Ovary (tissue), 10 donors: ENCODE measurements at regions of chr14 and their contacts with region 1.

Region 1: GRCh38 chr14:66495218-66496098 is 9.3 kb downstream of the CCDC196 start:
- DNase-seq: peak in 3 of 5 donors; percentile 11 to 50 (median 31)
- H3K4me3 ChIP-seq: no peak overlapping the region
- H3K27ac ChIP-seq: no peak overlapping the region
- H3K4me1 ChIP-seq: no peaks in the 10 kb centered on the region
- H3K27me3 ChIP-seq: no peaks in the 10 kb centered on the region
- CTCF ChIP-seq: peak; percentile 48 to 59 (median 56)
- EP300 ChIP-seq: no peak
- POLR2A ChIP-seq: no peak

Region 2: GRCh38 chr14:66315548-66315947 is 179.9 kb before region 1 on chr14:
- intact Hi-C with region 1: no loop called
- DNase-seq: no peak
- H3K4me3 ChIP-seq: no peak overlapping the region
- H3K27ac ChIP-seq: no peak overlapping the region
- H3K4me1 ChIP-seq: no peaks in the 10 kb centered on the region
- H3K27me3 ChIP-seq: no peaks in the 10 kb centered on the region
- CTCF ChIP-seq: no peak
- EP300 ChIP-seq: no peak
- POLR2A ChIP-seq: no peak

Region 3: DNA sequence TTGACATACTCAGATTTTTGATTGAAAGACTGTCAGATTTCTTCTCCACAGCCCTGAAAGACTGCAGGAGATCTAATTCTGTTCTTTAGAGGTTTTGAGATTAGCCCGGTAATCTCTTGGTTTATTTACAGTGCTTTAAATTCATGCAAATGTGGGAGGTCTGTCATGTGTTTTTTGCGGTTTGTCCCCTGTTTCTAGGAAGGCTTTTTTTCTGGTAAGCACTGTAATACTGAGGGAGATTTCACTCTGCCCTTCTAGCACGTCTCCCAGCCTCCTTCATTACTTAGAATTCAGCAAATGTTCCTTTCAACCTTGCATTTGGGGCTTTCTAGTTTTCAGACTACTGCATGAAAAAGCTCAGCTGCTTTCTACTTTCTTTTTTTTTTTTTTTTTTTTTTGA is 43.6 kb after region 1 on chr14:
- intact Hi-C with region 1: no loop called
- DNase-seq: no peak
- H3K4me3 ChIP-seq: no peak overlapping the region
- H3K27ac ChIP-seq: no peak overlapping the region
- H3K4me1 ChIP-seq: no peaks in the 10 kb centered on the region
- H3K27me3 ChIP-seq: no peaks in the 10 kb centered on the region
- CTCF ChIP-seq: no peak
- EP300 ChIP-seq: no peak
- POLR2A ChIP-seq: no peak

Region 4: DNA sequence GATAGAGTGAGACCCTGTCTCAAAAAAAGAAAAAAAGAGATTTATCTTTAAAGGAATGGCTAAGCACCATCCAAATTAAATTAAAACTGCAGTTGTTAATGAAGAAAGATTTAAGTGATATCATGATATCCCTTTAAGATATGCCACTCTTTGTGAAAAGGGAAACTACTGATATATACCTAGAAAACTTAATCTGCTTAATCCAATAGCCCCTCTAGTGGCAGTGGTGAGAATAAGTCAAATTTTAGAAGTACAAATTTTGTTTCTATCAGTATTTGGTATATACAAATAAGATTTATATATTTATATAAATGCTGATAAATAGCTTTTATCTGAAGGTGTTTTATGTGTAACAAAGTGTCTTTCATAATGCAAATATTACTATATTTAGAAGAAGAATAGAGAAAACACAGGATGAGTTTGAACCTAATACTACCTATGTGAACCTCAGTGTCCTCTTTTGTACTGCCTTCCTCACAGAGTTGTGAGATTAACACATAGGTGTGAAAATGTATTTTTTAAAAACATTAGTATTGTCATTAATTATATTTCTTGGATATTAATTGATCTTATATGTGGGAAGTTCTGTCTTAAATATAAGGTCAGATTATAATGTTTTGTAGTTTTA is 642.4 kb after region 1 on chr14:
- intact Hi-C with region 1: loop called in 1 of 4 experiments (anchors 10 kb)
- DNase-seq: no peak
- H3K4me3 ChIP-seq: no peak overlapping the region
- H3K27ac ChIP-seq: no peak overlapping the region
- H3K4me1 ChIP-seq: no peaks in the 10 kb centered on the region
- H3K27me3 ChIP-seq: peaks cover 2% of the 10 kb centered on the region
- CTCF ChIP-seq: no peak
- EP300 ChIP-seq: no peak
- POLR2A ChIP-seq: no peak